Activated CD4-positive, alpha-beta memory T cell treated with anti-CD3 and anti-CD28 coated beads, Interleukin-2, amount 10 ng/mL, durations not matched to agents 7 days and 5 days (primary cell): ENCODE measurements at regions of chr9 and their contacts with region 1.

Region 1: DNA sequence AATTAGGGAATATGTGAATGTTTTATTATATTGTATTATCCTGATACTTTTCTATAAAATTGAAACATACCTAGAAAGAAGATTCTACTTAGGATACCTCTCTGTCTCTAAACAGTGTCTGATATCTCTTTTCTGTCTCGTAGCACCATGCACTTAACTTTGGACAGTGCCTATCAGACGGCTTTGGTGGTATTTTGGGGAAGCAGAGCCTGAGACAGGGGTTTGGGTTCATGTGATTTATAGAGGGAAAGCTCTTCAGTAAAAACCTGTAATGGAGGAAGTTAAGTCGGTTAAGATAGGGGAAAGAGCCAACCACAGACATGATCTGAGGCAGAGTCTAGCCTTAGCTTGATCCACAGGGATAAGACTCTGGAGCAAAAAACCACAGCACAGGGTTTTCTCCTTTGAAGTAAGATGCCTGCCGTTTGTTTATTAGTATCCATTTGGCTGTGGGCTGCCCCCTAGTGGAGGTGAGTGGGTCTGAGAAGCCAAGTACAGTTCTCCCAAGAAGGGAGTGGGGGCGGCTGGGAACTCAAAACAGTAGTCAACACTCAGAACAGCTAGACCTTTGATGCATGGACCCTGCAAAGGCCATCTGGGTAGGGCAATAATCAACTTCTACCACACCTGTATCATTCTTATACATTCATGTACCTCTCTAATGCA is 141.2 kb upstream of the ASTN2 start:
- DNase-seq: peak; percentile 36
- H3K4me3 Mint-ChIP-seq: no peak overlapping the region
- H3K27ac Mint-ChIP-seq: no peak overlapping the region
- H3K4me1 Mint-ChIP-seq: no peaks in the 10 kb centered on the region
- H3K27me3 Mint-ChIP-seq: no peaks in the 10 kb centered on the region

Region 2: GRCh38 chr9:117487555-117488175 is 68.4 kb before region 1 on chr9:
- CTCF ChIA-PET with region 1: interaction called, 18 read pairs
- POLR2A ChIA-PET with region 1: no interaction called
- DNase-seq: peak; percentile 49
- H3K4me3 Mint-ChIP-seq: no peak overlapping the region
- H3K27ac Mint-ChIP-seq: no peak overlapping the region
- H3K4me1 Mint-ChIP-seq: no peaks in the 10 kb centered on the region
- H3K27me3 Mint-ChIP-seq: no peaks in the 10 kb centered on the region

Region 3: GRCh38 chr9:117612317-117612716 is 56.2 kb after region 1 on chr9:
- CTCF ChIA-PET with region 1: no interaction called
- POLR2A ChIA-PET with region 1: no interaction called
- DNase-seq: no peak
- H3K4me3 Mint-ChIP-seq: no peak overlapping the region
- H3K27ac Mint-ChIP-seq: no peak overlapping the region
- H3K4me1 Mint-ChIP-seq: no peaks in the 10 kb centered on the region
- H3K27me3 Mint-ChIP-seq: no peaks in the 10 kb centered on the region